HCT116 (cell line): ENCODE measurements at regions of chr6 and their contacts with region 1.

Region 1: DNA sequence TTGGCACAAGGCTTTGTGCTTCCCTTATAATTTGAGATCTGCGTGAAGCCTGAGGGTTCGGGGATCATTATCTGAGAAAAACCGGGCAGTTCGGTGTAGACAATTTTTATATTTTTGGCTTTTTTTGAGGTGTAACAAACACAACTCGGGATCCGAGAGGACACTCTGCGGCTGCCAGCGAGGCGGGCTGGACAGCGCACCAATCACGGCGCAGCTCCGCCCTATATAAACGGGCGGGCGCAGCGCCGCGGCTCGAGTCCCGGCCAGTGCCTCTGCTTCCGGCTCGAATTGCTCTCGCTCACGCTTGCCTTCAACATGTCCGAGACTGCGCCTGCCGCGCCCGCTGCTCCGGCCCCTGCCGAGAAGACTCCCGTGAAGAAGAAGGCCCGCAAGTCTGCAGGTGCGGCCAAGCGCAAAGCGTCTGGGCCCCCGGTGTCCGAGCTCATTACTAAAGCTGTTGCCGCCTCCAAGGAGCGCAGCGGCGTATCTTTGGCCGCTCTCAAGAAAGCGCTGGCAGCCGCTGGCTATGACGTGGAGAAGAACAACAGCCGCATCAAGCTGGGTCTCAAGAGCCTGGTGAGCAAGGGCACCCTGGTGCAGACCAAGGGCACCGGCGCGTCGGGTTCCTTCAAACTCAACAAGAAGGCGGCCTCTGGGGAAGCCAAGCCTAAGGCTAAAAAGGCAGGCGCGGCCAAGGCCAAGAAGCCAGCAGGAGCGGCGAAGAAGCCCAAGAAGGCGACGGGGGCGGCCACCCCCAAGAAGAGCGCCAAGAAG is 69.0 kb downstream of the HFE start:
- DNase-seq: peak; percentile 73
- ATAC-seq: peak; percentile 60
- H3K4me3 ChIP-seq: peak overlapping the region; percentile 69 to 75
- H3K27ac ChIP-seq: peak overlapping the region; percentile 88
- H3K4me1 ChIP-seq: peaks cover 20 to 71% of the 10 kb centered on the region in 2 experiments
- H3K27me3 ChIP-seq: no peaks in the 10 kb centered on the region
- CTCF ChIP-seq: no peak
- POLR2A ChIP-seq: peak; percentile 98
- RAD21 ChIP-seq: peak; percentile 16; the same call in 1 of the 2 replicates

Region 2: DNA sequence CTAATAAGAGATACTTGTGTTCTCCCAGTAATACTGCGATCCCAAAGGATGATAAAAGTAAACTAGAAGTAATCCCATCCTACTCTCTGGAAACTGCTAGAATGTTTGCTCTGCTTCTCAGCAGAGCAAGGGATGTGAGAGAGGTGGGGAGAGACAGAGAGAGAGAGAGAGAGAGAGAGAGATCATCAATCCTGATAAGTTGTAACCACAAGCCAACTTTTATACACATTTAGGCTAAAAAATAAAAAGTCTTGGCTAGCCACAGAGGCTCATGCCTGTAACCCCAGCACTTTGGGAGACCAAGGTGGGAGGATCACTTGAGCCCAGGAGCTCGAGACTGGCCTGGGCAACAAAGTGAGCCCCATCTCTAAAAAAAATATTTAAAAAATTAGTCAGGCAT is 209.6 kb before region 1 on chr6:
- CTCF ChIA-PET with region 1: no interaction called
- POLR2A ChIA-PET with region 1: no interaction called
- RAD21 ChIA-PET with region 1: no interaction called
- intact Hi-C with region 1: no loop called
- DNase-seq: no peak
- ATAC-seq: no peak
- H3K4me3 ChIP-seq: no peak overlapping the region
- H3K27ac ChIP-seq: no peak overlapping the region
- H3K4me1 ChIP-seq: no peaks in the 10 kb centered on the region
- H3K27me3 ChIP-seq: no peaks in the 10 kb centered on the region
- CTCF ChIP-seq: no peak
- POLR2A ChIP-seq: no peak
- RAD21 ChIP-seq: no peak

Region 3: DNA sequence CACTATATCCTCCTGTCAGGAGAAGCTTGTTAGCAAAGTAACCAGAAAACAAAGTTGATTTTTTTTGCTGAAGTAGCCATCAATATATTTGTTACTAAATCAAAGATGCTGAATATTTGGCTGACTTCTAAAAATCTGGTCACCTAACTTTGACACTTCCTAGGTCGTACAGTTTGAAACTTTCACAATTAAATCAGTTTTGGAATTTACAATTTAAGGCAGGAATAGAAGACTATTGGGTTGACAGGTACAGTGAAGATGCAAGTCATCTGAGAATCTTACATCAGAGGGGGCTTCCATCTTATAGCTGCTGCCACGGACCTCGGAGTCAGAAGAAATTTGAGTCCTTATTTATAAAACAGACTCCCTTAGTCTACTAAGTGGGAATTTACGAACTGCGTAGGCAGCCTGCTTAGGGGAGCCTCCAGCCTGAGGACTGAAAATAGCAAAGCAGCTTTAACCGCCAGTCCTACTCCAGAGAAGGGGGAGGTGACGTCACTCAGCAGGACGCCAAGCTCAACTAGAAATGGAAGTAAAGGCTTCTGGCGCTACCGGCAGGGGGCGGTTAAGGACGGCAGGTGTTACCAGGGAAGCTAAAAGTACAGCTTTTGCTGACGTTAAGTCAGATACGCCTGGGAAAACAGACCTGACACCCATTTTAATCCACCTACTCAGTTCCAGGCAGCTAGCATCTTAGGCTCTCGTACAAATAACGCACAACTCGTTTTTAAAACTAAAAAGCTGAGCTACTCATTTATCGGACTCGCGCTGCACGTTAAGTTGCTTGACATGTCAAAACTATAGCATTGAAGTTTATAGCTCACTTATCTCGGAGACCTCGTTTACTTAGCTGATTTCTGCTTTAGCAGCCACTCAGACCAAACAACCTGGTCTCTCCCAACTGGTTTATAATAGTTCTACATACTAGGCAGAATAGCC is 130.1 kb before region 1 on chr6:
- CTCF ChIA-PET with region 1: no interaction called
- POLR2A ChIA-PET with region 1: interaction called, 105 read pairs
- RAD21 ChIA-PET with region 1: no interaction called
- intact Hi-C with region 1: no loop called
- DNase-seq: peak; percentile 92
- ATAC-seq: peak; percentile 38
- H3K4me3 ChIP-seq: peak overlapping the region; percentile 52 to 66
- H3K27ac ChIP-seq: peak overlapping the region; percentile 98
- H3K4me1 ChIP-seq: peaks cover 51 to 84% of the 10 kb centered on the region in 2 experiments
- H3K27me3 ChIP-seq: no peaks in the 10 kb centered on the region
- CTCF ChIP-seq: peak in 2 of 3 experiments; percentile 84 to 89; a peak in 4 of 6 replicates
- POLR2A ChIP-seq: no peak
- RAD21 ChIP-seq: no peak

Region 4: DNA sequence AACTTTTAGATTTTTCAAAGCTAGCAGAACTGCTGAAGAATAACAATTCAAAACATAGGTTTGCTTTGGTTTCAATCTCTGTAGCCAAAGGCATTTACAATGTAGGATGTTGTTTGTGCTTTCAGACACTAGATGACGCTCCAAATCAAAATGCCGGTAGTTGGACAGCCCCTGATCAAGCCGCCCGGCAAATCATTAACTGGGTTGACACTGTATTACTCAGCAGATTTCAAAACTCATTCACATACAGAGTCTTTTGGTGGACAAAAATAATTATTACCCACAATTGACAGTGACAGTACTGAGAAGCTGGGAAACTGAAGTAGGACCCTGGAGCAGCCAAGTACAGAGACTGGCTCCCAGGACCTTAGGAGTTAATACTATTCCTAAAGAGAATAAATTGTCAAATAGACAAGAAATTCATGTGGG is 90.3 kb before region 1 on chr6:
- CTCF ChIA-PET with region 1: no interaction called
- POLR2A ChIA-PET with region 1: interaction called, 3 read pairs
- RAD21 ChIA-PET with region 1: no interaction called
- intact Hi-C with region 1: loop called (anchors 2 kb)
- DNase-seq: peak; percentile 79
- ATAC-seq: peak; percentile 81
- H3K4me3 ChIP-seq: no peak overlapping the region
- H3K27ac ChIP-seq: peak overlapping the region; percentile 37; the same call in 1 of the 2 replicates
- H3K4me1 ChIP-seq: peaks cover 18 to 29% of the 10 kb centered on the region in 2 experiments; a peak in 3 of 4 replicates
- H3K27me3 ChIP-seq: no peaks in the 10 kb centered on the region
- CTCF ChIP-seq: peak; percentile 77 to 92 (median 86)
- POLR2A ChIP-seq: no peak
- RAD21 ChIP-seq: peak; percentile 94

Region 5: GRCh38 chr6:26129656-26130055 is 26.6 kb before region 1 on chr6:
- CTCF ChIA-PET with region 1: interaction called, 7 read pairs
- POLR2A ChIA-PET with region 1: interaction called, 571 read pairs
- RAD21 ChIA-PET with region 1: interaction called, 3 to 5 read pairs
- intact Hi-C with region 1: loop called (anchors 1 kb)
- DNase-seq: no peak
- ATAC-seq: no peak
- H3K4me3 ChIP-seq: no peak overlapping the region
- H3K27ac ChIP-seq: no peak overlapping the region
- H3K4me1 ChIP-seq: peaks cover 6 to 34% of the 10 kb centered on the region in 2 experiments
- H3K27me3 ChIP-seq: no peaks in the 10 kb centered on the region
- CTCF ChIP-seq: no peak
- POLR2A ChIP-seq: no peak
- RAD21 ChIP-seq: no peak

Region 6: GRCh38 chr6:26175428-26176181 is 19.3 kb after region 1 on chr6:
- CTCF ChIA-PET with region 1: interaction called, 3 read pairs
- POLR2A ChIA-PET with region 1: interaction called, 46 read pairs
- RAD21 ChIA-PET with region 1: no interaction called
- intact Hi-C with region 1: no loop called
- DNase-seq: no peak
- ATAC-seq: no peak
- H3K4me3 ChIP-seq: no peak overlapping the region
- H3K27ac ChIP-seq: peak overlapping the region; percentile 46; the same call in 1 of the 2 replicates
- H3K4me1 ChIP-seq: peaks cover 11 to 28% of the 10 kb centered on the region in 2 experiments
- H3K27me3 ChIP-seq: no peaks in the 10 kb centered on the region
- CTCF ChIP-seq: peak; percentile 62 to 75 (median 73)
- POLR2A ChIP-seq: no peak
- RAD21 ChIP-seq: peak; percentile 83

Region 7: DNA sequence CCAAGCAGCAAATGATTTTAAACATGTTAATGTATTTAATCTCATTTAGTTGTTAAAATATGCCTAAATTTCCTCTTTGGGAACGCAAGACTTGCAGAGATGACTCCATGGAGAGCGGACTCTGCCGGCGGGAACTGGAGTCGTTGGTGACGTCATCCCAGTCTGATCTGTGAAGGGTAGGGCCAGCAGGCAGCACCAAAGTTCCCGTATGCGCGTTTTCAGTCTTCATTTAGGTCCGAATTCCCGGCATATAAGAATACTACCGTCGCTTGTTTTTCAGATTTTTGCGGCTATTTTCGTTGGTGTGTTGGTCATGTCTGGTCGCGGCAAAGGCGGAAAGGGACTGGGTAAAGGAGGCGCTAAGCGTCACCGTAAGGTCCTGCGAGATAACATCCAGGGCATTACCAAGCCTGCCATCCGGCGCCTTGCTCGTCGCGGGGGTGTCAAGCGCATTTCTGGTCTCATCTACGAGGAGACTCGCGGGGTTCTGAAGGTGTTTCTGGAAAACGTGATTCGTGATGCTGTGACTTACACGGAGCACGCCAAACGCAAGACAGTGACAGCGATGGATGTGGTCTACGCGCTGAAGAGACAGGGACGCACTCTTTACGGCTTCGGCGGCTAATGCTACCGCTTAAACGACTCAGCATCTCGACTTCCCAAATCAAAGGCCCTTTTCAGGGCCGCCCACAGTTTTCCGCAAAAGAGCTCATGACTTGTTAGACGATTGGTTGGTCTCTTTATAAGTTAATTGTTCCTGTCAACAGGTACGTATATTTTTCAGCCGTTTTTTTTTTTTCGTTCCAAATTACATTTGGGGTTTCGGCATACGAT is 48.3 kb after region 1 on chr6:
- CTCF ChIA-PET with region 1: no interaction called
- POLR2A ChIA-PET with region 1: interaction called, 179 read pairs
- RAD21 ChIA-PET with region 1: no interaction called
- intact Hi-C with region 1: loop called (anchors 1 kb)
- DNase-seq: peak; percentile 98
- ATAC-seq: peak; percentile 72
- H3K4me3 ChIP-seq: peak overlapping the region; percentile 63 to 71
- H3K27ac ChIP-seq: peak overlapping the region; percentile 98
- H3K4me1 ChIP-seq: peaks cover 26 to 40% of the 10 kb centered on the region in 2 experiments
- H3K27me3 ChIP-seq: no peaks in the 10 kb centered on the region
- CTCF ChIP-seq: peak in 1 of 3 experiments; percentile 20; a peak in 2 of 6 replicates
- POLR2A ChIP-seq: peak; percentile 99
- RAD21 ChIP-seq: peak; percentile 2; the same call in 1 of the 2 replicates